Lower leg skin (tissue), 4 donors: ENCODE measurements at regions of chr3 and their contacts with region 1.

Region 1: GRCh38 chr3:190575437-190576185 is 61.7 kb downstream of the IL1RAP start:
- DNase-seq: no peak
- H3K4me3 ChIP-seq: no peak overlapping the region
- CTCF ChIP-seq: no peak
- POLR2A ChIP-seq: no peak

Region 2: GRCh38 chr3:190330936-190331734 is 244.5 kb before region 1 on chr3:
- intact Hi-C with region 1: loop called (anchors 5 kb)
- DNase-seq: no peak
- H3K4me3 ChIP-seq: no peak overlapping the region
- CTCF ChIP-seq: no peak
- POLR2A ChIP-seq: no peak

Region 3: DNA sequence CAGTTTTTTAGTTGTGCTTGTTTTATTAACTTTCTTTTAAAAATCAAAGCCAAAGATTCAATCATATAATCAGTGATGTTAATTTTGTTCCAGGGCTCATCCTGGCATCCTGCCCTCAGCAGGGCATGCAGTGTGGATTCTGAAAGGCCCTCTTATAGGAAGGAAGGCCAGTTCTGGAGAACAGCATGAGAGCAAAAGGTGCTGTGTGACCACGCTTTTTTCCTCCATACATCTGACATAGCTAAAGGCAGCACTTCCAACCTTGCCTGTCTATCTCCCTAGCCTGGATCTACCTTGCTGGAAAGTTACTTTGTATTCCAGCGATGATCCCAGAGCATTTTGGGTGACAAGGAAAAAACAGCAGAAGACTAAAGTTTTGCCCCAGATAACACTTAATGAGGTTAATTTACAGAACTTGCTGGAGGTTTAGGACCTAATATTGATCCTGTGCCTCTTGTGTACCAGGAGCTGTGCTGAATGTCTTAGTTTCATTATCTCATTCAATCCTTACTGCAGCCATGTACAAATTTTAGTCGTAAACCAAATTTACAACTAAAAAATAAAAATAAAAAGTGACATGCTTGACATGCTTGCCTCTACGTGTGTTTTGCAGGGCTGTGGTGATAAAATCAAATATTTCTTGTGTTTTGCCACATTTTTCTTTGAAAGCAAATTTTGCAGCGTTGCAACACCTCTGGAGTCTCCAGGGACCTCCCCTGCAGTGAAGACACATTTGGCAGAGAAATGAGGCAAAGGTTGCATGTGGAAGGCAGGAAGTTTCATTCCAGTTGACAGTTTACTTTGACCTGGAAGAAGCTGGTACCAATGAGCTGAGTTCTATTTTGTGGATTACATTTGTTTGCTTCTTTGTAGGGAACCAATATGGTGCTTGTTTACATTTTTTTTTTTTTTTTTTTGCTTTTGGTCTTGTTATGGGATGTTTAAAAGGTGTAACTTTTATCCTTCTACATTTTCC is 48.5 kb before region 1 on chr3:
- intact Hi-C with region 1: no loop called
- DNase-seq: no peak
- H3K4me3 ChIP-seq: no peak overlapping the region
- CTCF ChIP-seq: no peak
- POLR2A ChIP-seq: no peak